Activated B cell treated with CpG ODN at 0.5 μM for 24 hours (primary cell): ENCODE measurements at regions of chr19 and their contacts with region 1.

Region 1: GRCh38 chr19:18000935-18001778 is 6.8 kb upstream of the ARRDC2 start:
- DNase-seq: peak; percentile 92
- ATAC-seq: peak; percentile 82
- H3K4me3 Mint-ChIP-seq: peak overlapping the region; percentile 92
- H3K27ac Mint-ChIP-seq: peak overlapping the region; percentile 96
- H3K4me1 Mint-ChIP-seq: peaks cover 37% of the 10 kb centered on the region
- H3K27me3 Mint-ChIP-seq: no peaks in the 10 kb centered on the region
- CTCF ChIP-seq: no peak

Region 2: GRCh38 chr19:17847538-17848366 is 153.4 kb before region 1 on chr19 and contains the start of gene JAK3:
- CTCF ChIA-PET with region 1: interaction called, 3 read pairs
- POLR2A ChIA-PET with region 1: interaction called, 15 read pairs
- intact Hi-C with region 1: no loop called
- DNase-seq: peak; percentile 79
- ATAC-seq: peak; percentile 86
- H3K4me3 Mint-ChIP-seq: peak within 1 kb of the TSS; percentile 94
- H3K27ac Mint-ChIP-seq: peak within 1 kb of the TSS; percentile 96
- H3K4me1 Mint-ChIP-seq: peaks cover 73% of the 10 kb centered on the region
- H3K27me3 Mint-ChIP-seq: no peaks in the 10 kb centered on the region
- CTCF ChIP-seq: no peak
- total RNA-seq, gene JAK3: 213 and 256 TPM in 2 replicates

Region 3: DNA sequence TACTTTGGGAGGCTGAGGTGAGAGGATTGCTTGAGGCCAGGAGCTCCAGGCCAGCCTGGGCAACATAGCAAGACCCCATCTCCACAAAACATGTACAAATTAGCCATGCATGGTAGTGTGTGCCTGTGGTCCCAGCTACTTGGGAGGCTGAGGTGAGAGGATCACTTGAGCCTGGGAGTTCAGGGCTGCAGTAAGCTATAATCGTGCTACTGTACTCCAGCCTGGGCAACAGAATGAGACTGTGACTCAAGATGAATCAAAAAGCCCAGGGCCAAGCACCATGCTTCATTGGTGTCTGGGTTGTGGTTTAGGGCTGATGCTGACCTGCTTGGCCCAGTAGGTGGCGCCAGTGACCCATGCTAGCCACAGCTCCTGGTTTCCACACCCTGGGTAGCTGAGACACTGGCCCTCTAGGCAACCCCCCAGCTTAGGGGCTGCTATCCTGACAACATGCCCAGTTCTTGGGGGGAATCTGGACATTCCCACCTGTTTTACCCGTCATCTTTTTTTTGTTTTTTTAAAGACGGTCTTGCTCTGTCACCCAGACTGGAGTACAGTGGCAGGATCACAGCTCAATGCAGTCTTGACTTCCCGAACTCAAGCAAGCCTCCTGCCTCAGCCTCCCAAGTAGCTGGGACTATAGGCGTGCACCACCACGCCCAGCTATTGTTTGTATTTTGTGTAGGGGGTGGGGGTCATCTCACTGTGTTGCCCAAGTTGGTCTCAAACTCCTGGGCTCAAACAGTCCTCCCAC is 62.9 kb before region 1 on chr19:
- CTCF ChIA-PET with region 1: interaction called, 227 read pairs
- POLR2A ChIA-PET with region 1: interaction called, 39 read pairs
- intact Hi-C with region 1: loop called (anchors 1 kb)
- DNase-seq: peak; percentile 78
- ATAC-seq: peak; percentile 98
- H3K4me3 Mint-ChIP-seq: no peak overlapping the region
- H3K27ac Mint-ChIP-seq: no peak overlapping the region
- H3K4me1 Mint-ChIP-seq: peaks cover 10% of the 10 kb centered on the region
- H3K27me3 Mint-ChIP-seq: no peaks in the 10 kb centered on the region
- CTCF ChIP-seq: no peak

Region 4: GRCh38 chr19:18044825-18045304 is 43.7 kb after region 1 on chr19:
- CTCF ChIA-PET with region 1: interaction called, 3 read pairs
- POLR2A ChIA-PET with region 1: interaction called, 51 read pairs
- intact Hi-C with region 1: no loop called
- DNase-seq: peak; percentile 72
- ATAC-seq: peak; percentile 92
- H3K4me3 Mint-ChIP-seq: peak overlapping the region; percentile 78
- H3K27ac Mint-ChIP-seq: peak overlapping the region; percentile 96
- H3K4me1 Mint-ChIP-seq: peaks cover 55% of the 10 kb centered on the region
- H3K27me3 Mint-ChIP-seq: no peaks in the 10 kb centered on the region
- CTCF ChIP-seq: no peak

Region 5: DNA sequence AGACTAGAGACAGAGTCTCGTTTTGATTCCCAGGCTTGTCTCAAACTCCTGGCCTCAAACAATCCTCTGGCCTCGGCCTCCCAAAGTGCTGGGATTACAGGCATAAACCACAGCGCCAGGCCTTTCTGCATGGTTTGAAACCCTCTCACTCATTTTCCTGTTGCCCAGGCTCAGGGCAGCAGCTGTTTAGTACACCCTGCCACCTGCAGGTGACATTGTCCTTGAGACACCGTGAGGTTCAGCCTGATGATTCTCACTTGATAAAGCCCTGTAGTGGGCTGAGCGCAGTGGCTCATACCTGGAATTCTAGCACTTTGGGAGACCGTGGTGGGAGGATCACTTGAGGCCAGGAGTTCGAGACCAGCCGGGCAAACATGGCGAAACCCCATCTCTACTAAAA is 73.0 kb after region 1 on chr19:
- CTCF ChIA-PET with region 1: no interaction called
- POLR2A ChIA-PET with region 1: no interaction called
- intact Hi-C with region 1: no loop called
- DNase-seq: no peak
- ATAC-seq: no peak
- H3K4me3 Mint-ChIP-seq: no peak overlapping the region
- H3K27ac Mint-ChIP-seq: no peak overlapping the region
- H3K4me1 Mint-ChIP-seq: no peaks in the 10 kb centered on the region
- H3K27me3 Mint-ChIP-seq: no peaks in the 10 kb centered on the region
- CTCF ChIP-seq: no peak

Region 6: DNA sequence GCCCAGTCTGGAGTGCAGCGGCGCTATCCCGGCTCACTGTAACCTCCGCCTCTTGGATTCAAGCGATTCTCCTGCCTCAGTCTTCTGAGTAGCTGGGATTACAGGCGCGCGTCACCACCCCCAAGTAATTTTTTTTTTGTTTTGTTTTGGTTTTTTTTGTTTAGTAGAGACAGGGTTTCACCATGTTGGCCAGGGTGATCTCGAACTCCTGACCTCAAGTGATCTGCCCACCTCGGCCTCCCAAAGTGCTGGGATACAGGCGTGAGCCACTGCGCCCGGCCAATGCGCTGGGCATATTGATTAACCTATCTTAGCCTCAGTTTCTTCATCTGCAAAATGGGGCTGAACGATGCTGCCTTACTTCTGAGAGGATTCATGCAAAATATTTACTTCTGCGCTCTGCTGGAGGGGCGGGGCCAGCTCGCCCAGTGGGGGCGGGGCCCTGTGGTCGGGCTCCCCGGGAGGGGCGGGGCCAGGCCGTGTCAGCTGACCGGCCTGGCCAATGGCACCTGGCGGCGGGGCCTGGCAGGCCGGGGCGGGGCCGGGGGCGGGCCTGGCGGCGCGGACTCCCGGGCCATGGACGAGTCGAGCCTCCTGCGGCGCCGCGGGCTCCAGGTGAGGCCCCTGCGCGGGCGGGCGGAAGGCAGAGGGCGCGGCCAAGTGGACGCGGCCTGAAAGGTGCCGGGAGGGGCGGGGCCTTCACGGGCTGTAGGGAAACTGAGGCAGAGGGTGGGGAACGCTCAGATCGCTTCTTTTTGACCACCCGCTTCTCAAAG is 96.2 kb after region 1 on chr19 and contains the start of gene MAST3:
- CTCF ChIA-PET with region 1: no interaction called
- POLR2A ChIA-PET with region 1: interaction called, 19 read pairs
- intact Hi-C with region 1: loop called (anchors 1 kb)
- DNase-seq: peak; percentile 95
- ATAC-seq: peak; percentile 72
- H3K4me3 Mint-ChIP-seq: peak within 1 kb of the TSS; percentile 95
- H3K27ac Mint-ChIP-seq: peak within 1 kb of the TSS; percentile 96
- H3K4me1 Mint-ChIP-seq: peaks cover 43% of the 10 kb centered on the region
- H3K27me3 Mint-ChIP-seq: no peaks in the 10 kb centered on the region
- CTCF ChIP-seq: no peak
- total RNA-seq, gene MAST3: 44.3 and 48.6 TPM in 2 replicates

Region 7: DNA sequence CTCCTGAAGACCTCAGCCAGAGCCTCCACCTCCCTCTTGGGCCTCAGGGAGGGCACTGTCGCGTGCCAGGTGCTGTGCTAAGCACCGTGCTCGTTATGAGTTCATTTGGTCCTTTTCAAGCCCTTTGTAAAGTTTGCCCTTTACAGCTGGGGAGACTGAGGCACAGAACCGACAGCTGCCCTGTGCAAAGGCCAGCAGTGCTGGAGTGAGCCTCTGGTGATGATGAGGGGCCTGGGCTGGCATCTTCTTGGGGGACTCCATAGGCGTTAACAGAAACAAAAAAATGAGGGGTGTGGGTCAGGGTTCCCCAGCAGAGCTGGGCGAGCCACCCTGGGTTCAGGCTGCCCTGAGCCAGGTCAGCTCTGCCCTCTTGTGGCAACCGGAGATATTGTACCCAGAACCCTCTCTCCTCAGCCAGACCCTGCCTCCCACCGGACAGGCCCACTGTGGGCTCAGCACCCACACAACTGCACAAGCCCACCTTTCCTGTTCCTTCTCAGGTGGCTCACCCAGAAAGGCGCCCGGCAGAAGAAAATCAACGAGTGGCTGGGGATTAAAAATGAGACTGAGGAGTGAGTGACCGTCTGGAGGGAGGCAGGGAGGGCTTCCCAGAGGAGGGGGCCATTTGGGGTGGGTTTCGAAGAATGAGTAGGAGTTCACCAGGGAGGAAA is 167.0 kb after region 1 on chr19:
- CTCF ChIA-PET with region 1: interaction called, 3 read pairs
- POLR2A ChIA-PET with region 1: interaction called, 8 read pairs
- intact Hi-C with region 1: loop called (anchors 2 kb)
- DNase-seq: peak; percentile 52
- ATAC-seq: peak; percentile 34
- H3K4me3 Mint-ChIP-seq: peak overlapping the region; percentile 66
- H3K27ac Mint-ChIP-seq: peak overlapping the region; percentile 82
- H3K4me1 Mint-ChIP-seq: peaks cover 53% of the 10 kb centered on the region
- H3K27me3 Mint-ChIP-seq: no peaks in the 10 kb centered on the region
- CTCF ChIP-seq: peak; percentile 44

Region 8: GRCh38 chr19:18507021-18507726 is 506.0 kb after region 1 on chr19:
- CTCF ChIA-PET with region 1: no interaction called
- POLR2A ChIA-PET with region 1: no interaction called
- intact Hi-C with region 1: no loop called
- DNase-seq: no peak
- ATAC-seq: no peak
- H3K4me3 Mint-ChIP-seq: no peak overlapping the region
- H3K27ac Mint-ChIP-seq: no peak overlapping the region
- H3K4me1 Mint-ChIP-seq: peaks cover 62% of the 10 kb centered on the region
- H3K27me3 Mint-ChIP-seq: no peaks in the 10 kb centered on the region
- CTCF ChIP-seq: no peak